ENCODE measurements at regions of chr3 and their contacts with region 1.

Region 1: DNA sequence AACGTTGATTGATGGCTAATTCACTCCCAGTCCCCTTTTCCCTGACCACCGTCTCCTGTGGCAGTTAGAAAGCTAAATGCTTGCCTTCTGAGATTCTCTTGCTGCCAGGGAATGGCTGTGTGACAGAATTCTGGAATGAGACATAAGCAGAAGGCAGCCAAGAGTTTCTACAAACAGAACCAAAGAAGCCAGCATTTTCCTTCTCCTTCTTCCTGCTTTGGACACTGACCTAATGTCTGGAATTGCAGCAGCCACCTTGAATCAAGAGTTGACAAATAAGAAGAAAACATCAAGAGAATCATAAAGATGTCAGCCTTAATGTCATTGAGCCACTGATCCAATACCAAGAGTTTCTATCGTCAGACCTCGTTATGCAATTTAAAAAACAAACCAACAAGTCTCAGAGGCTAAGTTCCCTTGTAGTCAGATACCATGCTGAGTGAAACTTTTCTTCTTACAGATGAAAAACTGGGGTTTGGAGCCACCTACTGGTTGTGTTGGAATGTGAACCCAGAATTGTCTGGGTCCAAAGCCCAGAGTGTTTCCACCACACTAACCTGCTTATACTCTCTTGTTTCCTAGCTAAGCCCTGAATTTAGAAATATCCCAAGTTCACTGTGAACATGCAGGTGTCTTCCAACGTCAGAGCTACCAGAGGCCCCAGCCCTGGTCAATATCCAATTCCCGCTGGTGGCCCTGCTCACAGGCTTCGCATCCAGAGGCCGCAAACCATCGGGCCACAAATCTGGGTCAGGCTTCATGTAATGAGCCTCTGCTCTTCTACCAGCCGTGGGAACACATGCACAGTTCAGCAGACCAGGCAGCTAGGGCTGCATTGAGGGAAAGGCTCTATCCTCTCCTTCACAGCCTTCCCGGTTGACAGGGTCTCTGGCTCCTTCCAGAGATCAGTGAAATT is 42.5 kb downstream of the MCF2L2 start:
- DNase-seq: peak; percentile 77
- ATAC-seq: peak; percentile 67
- H3K4me3 ChIP-seq: no peak overlapping the region
- H3K4me3 Mint-ChIP-seq: no peak overlapping the region
- H3K27ac ChIP-seq: no peak overlapping the region
- H3K27ac Mint-ChIP-seq: no peak overlapping the region
- H3K4me1 ChIP-seq: peaks cover 14% of the 10 kb centered on the region in 2 donors
- H3K4me1 Mint-ChIP-seq: peaks cover 14% of the 10 kb centered on the region
- H3K27me3 ChIP-seq: peaks cover 0 to 11% (median 4%) of the 10 kb centered on the region in 4 experiments
- H3K27me3 Mint-ChIP-seq: peaks cover 16% of the 10 kb centered on the region
- CTCF ChIP-seq: peak; percentile 76

Region 2: DNA sequence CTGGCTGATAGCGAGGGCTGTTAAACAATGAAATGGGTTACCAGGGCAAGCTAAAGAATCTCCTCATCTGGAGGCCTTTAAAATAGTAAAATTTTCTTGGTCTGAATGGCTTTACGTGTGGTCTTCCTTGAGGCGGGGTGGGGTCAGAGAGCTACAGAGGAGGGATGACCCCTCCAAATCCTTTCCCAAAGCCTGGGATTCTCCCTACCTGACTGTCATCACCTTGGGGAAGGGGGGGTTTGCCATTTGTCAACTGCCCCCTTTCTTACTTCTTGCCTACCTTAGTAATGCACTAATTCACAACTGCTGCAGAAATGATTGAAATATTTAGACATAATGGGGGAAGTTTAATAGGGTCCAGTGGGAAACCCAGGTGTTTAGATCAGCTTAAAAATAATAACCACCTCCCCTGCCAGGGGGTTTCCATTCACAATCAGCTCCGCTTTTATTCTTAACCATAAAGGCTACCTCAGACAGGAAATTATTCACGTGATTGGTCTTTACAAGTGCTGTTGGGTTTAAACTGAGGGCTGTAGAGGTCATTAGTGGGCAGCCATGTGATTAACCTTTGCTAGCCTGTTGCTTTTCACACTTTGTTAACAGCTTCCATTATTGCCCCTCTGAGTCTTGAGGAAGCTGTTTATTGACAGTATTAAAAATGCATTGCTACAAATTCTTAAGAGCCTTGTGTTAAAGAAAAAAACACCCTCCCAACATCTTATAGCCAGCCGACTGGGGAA is 869.2 kb before region 1 on chr3:
- CTCF ChIA-PET with region 1: no interaction called
- POLR2A ChIA-PET with region 1: no interaction called
- intact Hi-C with region 1: no loop called
- DNase-seq: no peak
- ATAC-seq: no peak
- H3K4me3 ChIP-seq: no peak overlapping the region
- H3K4me3 Mint-ChIP-seq: no peak overlapping the region
- H3K27ac ChIP-seq: no peak overlapping the region
- H3K27ac Mint-ChIP-seq: no peak overlapping the region
- H3K4me1 ChIP-seq: no peaks in the 10 kb centered on the region
- H3K4me1 Mint-ChIP-seq: no peaks in the 10 kb centered on the region
- H3K27me3 ChIP-seq: no peaks in the 10 kb centered on the region
- H3K27me3 Mint-ChIP-seq: no peaks in the 10 kb centered on the region
- CTCF ChIP-seq: no peak

Region 3: DNA sequence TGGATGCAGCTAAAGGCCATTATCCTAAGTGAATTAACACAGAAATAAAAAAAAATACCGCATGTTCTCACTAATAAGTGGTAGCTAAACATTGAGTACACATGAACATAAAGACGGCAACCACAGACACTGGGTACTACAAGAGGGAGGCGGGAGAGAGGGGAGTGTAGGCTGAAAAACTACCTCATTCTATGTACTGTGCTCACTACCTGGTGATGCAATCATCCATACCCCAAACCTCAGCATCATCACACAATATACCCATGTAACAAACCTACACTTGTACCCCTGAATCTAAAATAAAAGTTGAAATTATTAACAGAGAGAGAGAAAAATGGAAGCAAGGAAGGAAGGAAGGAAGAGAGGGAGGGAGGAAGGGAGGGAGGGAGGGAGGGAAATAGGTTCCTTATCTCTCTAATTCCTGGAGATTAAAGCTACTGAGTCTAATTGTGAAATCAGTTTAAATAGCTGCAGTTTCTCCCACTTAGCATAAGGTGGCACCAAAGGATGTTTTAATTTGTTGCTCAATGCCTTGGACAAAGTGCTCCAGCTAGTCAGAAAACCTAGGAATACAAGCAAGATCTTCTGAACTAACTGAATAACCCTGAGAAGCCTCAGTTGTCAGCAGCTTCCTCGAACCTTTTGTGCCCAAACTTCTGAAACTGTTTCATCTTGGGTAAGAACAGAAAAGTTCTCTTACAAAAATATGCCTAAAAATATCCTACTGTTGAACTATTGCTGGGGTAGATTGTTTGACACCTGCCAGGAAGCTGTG is 672.0 kb before region 1 on chr3:
- CTCF ChIA-PET with region 1: interaction called, 44 read pairs
- POLR2A ChIA-PET with region 1: no interaction called
- intact Hi-C with region 1: loop called (anchors 1 kb)
- DNase-seq: peak; percentile 51
- ATAC-seq: peak; percentile 58
- H3K4me3 ChIP-seq: no peak overlapping the region
- H3K4me3 Mint-ChIP-seq: no peak overlapping the region
- H3K27ac ChIP-seq: no peak overlapping the region
- H3K27ac Mint-ChIP-seq: no peak overlapping the region
- H3K4me1 ChIP-seq: no peaks in the 10 kb centered on the region
- H3K4me1 Mint-ChIP-seq: peaks cover 4% of the 10 kb centered on the region
- H3K27me3 ChIP-seq: no peaks in the 10 kb centered on the region
- H3K27me3 Mint-ChIP-seq: peaks cover 5% of the 10 kb centered on the region
- CTCF ChIP-seq: peak; percentile 70

Region 4: GRCh38 chr3:183085634-183086390 is 300.1 kb before region 1 on chr3:
- CTCF ChIA-PET with region 1: interaction called, 13 read pairs
- POLR2A ChIA-PET with region 1: no interaction called
- intact Hi-C with region 1: no loop called
- DNase-seq: peak; percentile 11
- ATAC-seq: no peak
- H3K4me3 ChIP-seq: no peak overlapping the region
- H3K4me3 Mint-ChIP-seq: no peak overlapping the region
- H3K27ac ChIP-seq: no peak overlapping the region
- H3K27ac Mint-ChIP-seq: no peak overlapping the region
- H3K4me1 ChIP-seq: no peaks in the 10 kb centered on the region
- H3K4me1 Mint-ChIP-seq: no peaks in the 10 kb centered on the region
- H3K27me3 ChIP-seq: no peaks in the 10 kb centered on the region
- H3K27me3 Mint-ChIP-seq: no peaks in the 10 kb centered on the region
- CTCF ChIP-seq: peak; percentile 39

Region 5: DNA sequence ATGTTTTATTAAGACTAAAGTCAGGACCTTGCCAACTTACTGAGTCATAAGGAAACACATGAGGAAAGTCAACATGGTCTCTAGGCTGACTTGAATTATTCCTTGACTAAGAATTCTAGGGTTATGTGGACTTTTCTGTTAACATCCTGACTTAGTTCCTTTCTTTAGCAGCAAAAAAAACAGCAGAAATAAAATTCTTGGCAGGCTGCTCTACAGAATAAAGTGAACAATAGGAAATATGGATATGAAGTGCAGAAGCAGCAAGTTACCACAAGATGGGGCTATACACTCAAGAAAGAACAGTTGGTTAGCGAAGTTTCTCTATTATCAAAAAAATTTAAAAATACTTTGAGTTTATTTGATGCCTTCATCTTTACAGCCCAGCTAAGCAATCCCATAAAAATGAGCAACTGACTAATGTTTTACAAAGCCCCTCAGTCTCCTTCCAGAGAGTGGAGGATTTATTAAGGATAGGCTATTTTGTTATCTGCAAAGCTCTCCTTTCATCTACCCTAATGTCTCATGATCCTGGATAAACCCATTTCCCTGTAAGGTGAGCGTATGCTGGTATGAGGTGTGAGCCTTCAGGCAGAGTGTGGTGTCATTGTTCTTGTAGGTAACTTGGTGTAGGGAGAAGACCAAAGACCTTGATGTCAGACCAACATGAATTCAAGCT is 263.6 kb before region 1 on chr3:
- CTCF ChIA-PET with region 1: interaction called, 230 read pairs
- POLR2A ChIA-PET with region 1: no interaction called
- intact Hi-C with region 1: loop called (anchors 1 kb)
- DNase-seq: peak; percentile 70
- ATAC-seq: peak; percentile 60
- H3K4me3 ChIP-seq: no peak overlapping the region
- H3K4me3 Mint-ChIP-seq: no peak overlapping the region
- H3K27ac ChIP-seq: no peak overlapping the region
- H3K27ac Mint-ChIP-seq: no peak overlapping the region
- H3K4me1 ChIP-seq: no peaks in the 10 kb centered on the region
- H3K4me1 Mint-ChIP-seq: peaks cover under 1% of the 10 kb centered on the region
- H3K27me3 ChIP-seq: peaks cover 0 to 45% (median 33%) of the 10 kb centered on the region in 4 experiments
- H3K27me3 Mint-ChIP-seq: peaks cover 50% of the 10 kb centered on the region
- CTCF ChIP-seq: peak; percentile 97

Region 6: DNA sequence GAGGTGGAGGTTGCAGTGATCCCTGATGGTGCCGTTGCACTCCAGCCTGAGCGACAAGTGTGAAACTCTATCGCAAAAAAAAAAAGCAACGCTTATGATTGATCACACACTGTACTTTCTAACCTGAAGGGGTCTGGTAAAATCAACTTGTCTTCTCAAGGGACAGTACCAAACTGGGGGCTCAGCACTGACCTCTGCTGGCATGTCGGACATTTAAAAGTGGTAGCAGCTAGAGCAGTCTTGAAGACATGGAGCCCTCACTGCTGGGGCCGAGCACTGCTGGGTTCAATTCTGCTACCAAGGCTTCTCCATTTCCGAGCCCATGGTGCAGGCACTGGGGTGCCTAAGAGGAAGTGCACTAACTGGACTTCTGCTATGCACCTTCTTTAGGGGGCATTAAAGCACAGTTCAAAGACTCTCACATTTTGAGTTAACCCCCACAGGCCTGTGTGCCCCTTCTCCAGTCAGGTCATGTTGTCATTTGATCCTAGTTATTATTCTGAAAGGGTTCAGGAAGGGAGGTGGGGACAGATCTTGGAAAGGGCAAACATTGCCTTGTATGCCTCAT is 197.0 kb before region 1 on chr3:
- CTCF ChIA-PET with region 1: interaction called, 213 read pairs
- POLR2A ChIA-PET with region 1: interaction called, 3 read pairs
- intact Hi-C with region 1: loop called (anchors 1 kb)
- DNase-seq: peak; percentile 52
- ATAC-seq: peak; percentile 49
- H3K4me3 ChIP-seq: no peak overlapping the region
- H3K4me3 Mint-ChIP-seq: no peak overlapping the region
- H3K27ac ChIP-seq: no peak overlapping the region
- H3K27ac Mint-ChIP-seq: no peak overlapping the region
- H3K4me1 ChIP-seq: peaks cover 0 to 2% of the 10 kb centered on the region in 2 donors
- H3K4me1 Mint-ChIP-seq: peaks cover 4% of the 10 kb centered on the region
- H3K27me3 ChIP-seq: peaks cover 0 to 51% (median 14%) of the 10 kb centered on the region in 4 experiments
- H3K27me3 Mint-ChIP-seq: peaks cover 57% of the 10 kb centered on the region
- CTCF ChIP-seq: peak; percentile 15

Region 7: DNA sequence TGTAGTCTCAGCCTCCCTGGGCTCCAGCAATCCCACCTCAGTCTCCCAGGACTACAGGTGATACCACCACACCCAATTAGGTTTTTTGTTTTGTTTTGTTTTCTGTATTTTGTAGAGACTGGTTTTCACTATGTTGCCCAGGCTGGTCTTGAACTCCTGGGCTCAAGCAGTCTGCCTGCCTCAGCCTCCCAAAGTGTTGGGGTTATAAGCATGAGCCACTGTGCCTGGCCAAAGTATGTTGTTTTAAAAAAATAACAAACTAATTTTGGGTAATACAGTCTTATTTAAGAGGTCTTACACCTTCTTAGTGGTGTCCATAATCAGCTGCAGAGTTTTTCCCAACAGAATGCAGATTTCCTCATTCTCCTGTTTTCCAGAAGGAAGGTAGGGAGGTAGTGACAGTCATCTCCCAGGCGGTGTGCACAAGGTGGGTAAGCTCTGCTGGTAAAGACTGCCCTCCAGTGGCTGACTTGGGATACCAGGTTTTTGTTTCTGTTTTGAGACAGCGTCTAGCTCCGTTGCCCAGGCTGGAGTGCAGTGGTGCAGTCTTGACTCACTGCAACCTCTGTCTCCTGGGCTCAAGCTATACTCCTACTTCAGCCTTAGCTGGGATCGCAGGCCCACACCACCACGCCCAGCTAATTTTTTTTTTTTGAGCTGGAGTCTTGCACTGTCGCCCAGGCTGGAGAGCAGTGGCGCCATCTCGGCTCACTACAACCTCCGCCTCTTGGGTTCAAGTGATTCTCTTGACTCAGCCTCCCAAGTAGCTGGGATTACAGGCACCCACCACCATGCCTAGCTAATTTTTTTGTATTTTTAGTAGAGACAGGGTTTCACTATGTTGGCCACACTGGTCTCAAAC is 381.0 kb after region 1 on chr3:
- CTCF ChIA-PET with region 1: interaction called, 14 read pairs
- POLR2A ChIA-PET with region 1: no interaction called
- intact Hi-C with region 1: loop called (anchors 1 kb)
- DNase-seq: peak; percentile 78
- ATAC-seq: peak; percentile 79
- H3K4me3 ChIP-seq: no peak overlapping the region
- H3K4me3 Mint-ChIP-seq: no peak overlapping the region
- H3K27ac ChIP-seq: no peak overlapping the region
- H3K27ac Mint-ChIP-seq: no peak overlapping the region
- H3K4me1 ChIP-seq: peaks cover 9% of the 10 kb centered on the region in 2 donors
- H3K4me1 Mint-ChIP-seq: peaks cover 11% of the 10 kb centered on the region
- H3K27me3 ChIP-seq: no peaks in the 10 kb centered on the region
- H3K27me3 Mint-ChIP-seq: no peaks in the 10 kb centered on the region
- CTCF ChIP-seq: peak; percentile 83